HEK293 (cell line): ENCODE measurements at regions of chr6 and their contacts with region 1.

Region 1: DNA sequence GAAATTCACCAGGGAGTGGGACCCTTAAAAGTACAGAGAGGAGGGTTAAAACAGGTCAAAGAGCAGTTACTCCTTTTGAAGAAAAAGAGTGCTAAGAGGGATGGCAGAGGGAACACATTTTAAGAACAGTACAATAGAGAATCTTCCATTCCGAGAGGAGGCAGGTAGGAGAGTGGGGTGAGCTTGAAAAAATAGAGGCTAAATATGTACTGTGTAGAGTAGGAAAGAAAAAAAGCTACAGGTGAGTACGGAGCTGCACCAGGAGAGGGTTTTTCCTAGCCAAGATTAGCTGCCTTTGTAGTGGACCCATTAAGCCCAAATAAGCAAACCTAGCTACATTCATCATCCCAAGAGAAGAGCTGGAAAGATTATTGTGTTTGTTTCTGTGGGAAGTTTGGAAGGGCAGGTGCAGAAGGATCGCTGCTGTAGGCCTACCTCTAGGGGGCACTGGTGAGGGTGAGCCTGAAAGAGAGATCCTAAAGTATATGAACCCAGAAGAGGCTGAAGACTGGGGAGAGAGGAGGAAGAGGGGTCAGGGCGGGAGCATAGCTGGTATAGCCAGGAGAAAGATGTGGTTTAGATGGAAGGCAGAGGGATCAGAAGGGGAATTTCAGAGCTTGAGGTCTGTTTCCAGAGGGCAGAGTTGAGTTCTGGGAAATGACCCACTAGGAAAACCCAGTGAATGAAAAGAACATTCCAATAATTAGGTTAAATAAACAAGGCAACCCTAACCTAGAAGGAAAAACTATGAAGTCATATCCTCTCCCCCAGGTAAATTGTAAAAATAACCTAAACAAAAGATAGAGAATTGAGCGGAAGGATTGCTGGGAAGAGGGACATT is 50.2 kb upstream of the HINT3 start:
- H3K4me3 ChIP-seq: no peak overlapping the region
- H3K27ac ChIP-seq: no peak overlapping the region
- H3K4me1 ChIP-seq: no peaks in the 10 kb centered on the region
- CTCF ChIP-seq: peak; percentile 79

Region 2: DNA sequence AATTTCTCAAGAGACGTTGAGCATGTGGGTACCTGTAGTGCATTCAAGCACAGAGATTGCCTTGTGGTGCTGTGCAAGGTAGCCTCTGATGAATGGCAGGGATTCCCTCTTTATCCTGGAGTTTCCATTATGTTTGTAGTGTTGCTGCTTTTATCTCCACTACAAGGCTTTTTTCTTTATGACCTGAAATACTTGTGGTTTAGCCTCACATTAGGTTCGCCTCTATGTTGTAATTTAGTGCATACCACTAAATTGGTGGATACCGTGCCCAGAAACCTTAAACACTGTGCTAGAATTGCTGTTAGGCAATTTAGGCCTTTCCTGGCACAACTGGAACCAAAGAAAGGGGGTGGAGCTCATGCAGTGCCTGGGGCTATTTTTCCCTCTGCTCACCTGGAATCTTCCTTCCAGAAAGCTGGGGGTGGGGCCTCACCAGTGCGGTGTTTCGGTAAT is 38.9 kb before region 1 on chr6:
- CTCF ChIA-PET with region 1: interaction called, 12 read pairs
- POLR2A ChIA-PET with region 1: no interaction called
- H3K4me3 ChIP-seq: no peak overlapping the region
- H3K27ac ChIP-seq: no peak overlapping the region
- H3K4me1 ChIP-seq: peaks cover 10% of the 10 kb centered on the region; the same call in 1 of the 2 replicates
- CTCF ChIP-seq: no peak

Region 3: GRCh38 chr6:125888989-125889656 is 17.3 kb before region 1 on chr6:
- CTCF ChIA-PET with region 1: interaction called, 49 read pairs
- POLR2A ChIA-PET with region 1: no interaction called
- H3K4me3 ChIP-seq: no peak overlapping the region
- H3K27ac ChIP-seq: no peak overlapping the region
- H3K4me1 ChIP-seq: 0 out of 2 replicates have a peak, but pooled peaks cover 4% of the 10 kb centered on the region
- CTCF ChIP-seq: no peak

Region 4: GRCh38 chr6:125918681-125919566 is 12.5 kb after region 1 on chr6:
- CTCF ChIA-PET with region 1: interaction called, 72 read pairs
- POLR2A ChIA-PET with region 1: no interaction called
- H3K4me3 ChIP-seq: peak overlapping the region; percentile 15
- H3K27ac ChIP-seq: peak overlapping the region; percentile 14; the same call in 1 of the 2 replicates
- H3K4me1 ChIP-seq: peaks cover 11% of the 10 kb centered on the region
- CTCF ChIP-seq: no peak

Region 5: GRCh38 chr6:125923987-125924568 is 17.7 kb after region 1 on chr6:
- CTCF ChIA-PET with region 1: interaction called, 72 read pairs
- POLR2A ChIA-PET with region 1: no interaction called
- H3K4me3 ChIP-seq: no peak overlapping the region
- H3K27ac ChIP-seq: no peak overlapping the region
- H3K4me1 ChIP-seq: peaks cover 3% of the 10 kb centered on the region; the same call in 1 of the 2 replicates
- CTCF ChIP-seq: no peak

Region 6: GRCh38 chr6:125944434-125944816 is 38.0 kb after region 1 on chr6:
- CTCF ChIA-PET with region 1: interaction called, 13 read pairs
- POLR2A ChIA-PET with region 1: interaction called, 3 read pairs
- H3K4me3 ChIP-seq: no peak overlapping the region
- H3K27ac ChIP-seq: no peak overlapping the region
- H3K4me1 ChIP-seq: peaks cover 10% of the 10 kb centered on the region
- CTCF ChIP-seq: no peak

Region 7: GRCh38 chr6:126063512-126064146 is 157.3 kb after region 1 on chr6:
- CTCF ChIA-PET with region 1: no interaction called
- POLR2A ChIA-PET with region 1: no interaction called
- H3K4me3 ChIP-seq: no peak overlapping the region
- H3K27ac ChIP-seq: peak overlapping the region; percentile 4; the same call in 1 of the 2 replicates
- H3K4me1 ChIP-seq: peaks cover 22% of the 10 kb centered on the region
- CTCF ChIP-seq: no peak

Region 8: GRCh38 chr6:126107475-126108166 is 201.2 kb after region 1 on chr6:
- CTCF ChIA-PET with region 1: no interaction called
- POLR2A ChIA-PET with region 1: no interaction called
- H3K4me3 ChIP-seq: no peak overlapping the region
- H3K27ac ChIP-seq: no peak overlapping the region
- H3K4me1 ChIP-seq: no peaks in the 10 kb centered on the region
- CTCF ChIP-seq: no peak

Region 9: DNA sequence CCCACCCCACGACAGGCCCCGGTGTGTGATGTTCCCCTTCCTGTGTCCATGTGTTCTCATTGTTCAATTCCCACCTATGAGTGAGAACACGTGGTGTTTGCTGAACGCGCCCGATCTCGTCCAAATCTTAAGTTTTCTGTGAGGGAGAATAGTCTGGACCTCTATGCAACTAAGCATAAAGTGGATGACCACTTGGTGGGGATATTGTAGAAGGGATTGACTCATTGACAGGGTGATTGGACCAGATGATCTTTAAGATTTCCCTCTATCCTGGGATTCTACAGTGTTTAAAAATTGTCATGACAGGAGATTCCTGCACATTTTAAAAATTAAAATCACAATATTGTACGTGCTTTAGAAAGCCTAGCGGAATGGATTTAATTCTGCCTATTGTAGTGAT is 221.3 kb after region 1 on chr6:
- CTCF ChIA-PET with region 1: no interaction called
- POLR2A ChIA-PET with region 1: no interaction called
- H3K4me3 ChIP-seq: no peak overlapping the region
- H3K27ac ChIP-seq: no peak overlapping the region
- H3K4me1 ChIP-seq: no peaks in the 10 kb centered on the region
- CTCF ChIP-seq: no peak

Region 10: GRCh38 chr6:126661646-126662045 is 755.3 kb after region 1 on chr6:
- CTCF ChIA-PET with region 1: no interaction called
- POLR2A ChIA-PET with region 1: no interaction called
- H3K4me3 ChIP-seq: no peak overlapping the region
- H3K27ac ChIP-seq: no peak overlapping the region
- H3K4me1 ChIP-seq: no peaks in the 10 kb centered on the region
- CTCF ChIP-seq: no peak